ENCODE measurements at regions of chr18 and their contacts with region 1.

Region 1: GRCh38 chr18:42126586-42126985 is 171.6 kb downstream of the PIK3C3 start:
- DNase-seq: no peak
- ATAC-seq: no peak

Region 2: DNA sequence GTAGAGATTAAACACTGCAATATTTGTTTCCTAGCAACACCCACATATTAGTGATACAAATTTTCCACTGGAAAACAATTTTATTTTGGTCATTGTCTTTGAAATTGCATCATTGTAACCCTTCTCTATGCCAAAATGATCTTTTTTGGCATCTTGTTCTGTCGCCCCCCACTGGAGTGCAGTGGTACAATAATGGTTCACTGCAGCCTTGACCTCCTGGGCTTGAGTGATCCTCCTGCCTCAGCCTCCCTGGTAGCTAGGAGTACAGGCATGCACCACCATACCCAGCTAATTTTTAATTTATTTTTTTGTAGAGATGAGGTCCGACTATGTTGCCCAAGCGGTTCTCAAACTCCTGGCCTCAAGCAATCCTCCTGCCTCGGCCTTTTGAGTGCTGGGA is 54.2 kb before region 1 on chr18:
- intact Hi-C with region 1: no loop called
- DNase-seq: no peak
- ATAC-seq: no peak

Region 3: DNA sequence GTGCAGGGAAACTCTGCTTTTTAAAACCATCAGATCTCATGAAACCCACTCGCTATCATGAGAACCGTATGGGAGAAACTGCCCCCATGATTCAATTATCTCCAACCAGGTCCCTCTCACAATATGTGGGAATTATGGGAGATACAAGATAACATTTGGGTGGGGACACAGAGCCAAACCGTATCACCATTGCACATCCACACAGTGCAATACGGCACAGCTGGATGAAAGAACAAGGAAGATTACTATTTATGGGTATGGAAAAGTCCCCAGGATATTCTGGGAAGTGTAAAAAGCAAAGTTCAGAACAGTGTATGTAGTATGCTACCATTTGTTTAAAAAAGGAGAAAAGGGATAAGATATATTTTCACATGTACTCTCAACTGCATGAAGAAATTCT is 118.6 kb after region 1 on chr18:
- intact Hi-C with region 1: no loop called
- DNase-seq: no peak
- ATAC-seq: no peak

Region 4: GRCh38 chr18:43248610-43249249 is 1122.1 kb after region 1 on chr18:
- intact Hi-C with region 1: loop called in 1 of 2 experiments (anchors 10 kb)
- DNase-seq: no peak
- ATAC-seq: no peak